AG04449 (cell line): ENCODE measurements at regions of chr16 and their contacts with region 1.

Region 1: DNA sequence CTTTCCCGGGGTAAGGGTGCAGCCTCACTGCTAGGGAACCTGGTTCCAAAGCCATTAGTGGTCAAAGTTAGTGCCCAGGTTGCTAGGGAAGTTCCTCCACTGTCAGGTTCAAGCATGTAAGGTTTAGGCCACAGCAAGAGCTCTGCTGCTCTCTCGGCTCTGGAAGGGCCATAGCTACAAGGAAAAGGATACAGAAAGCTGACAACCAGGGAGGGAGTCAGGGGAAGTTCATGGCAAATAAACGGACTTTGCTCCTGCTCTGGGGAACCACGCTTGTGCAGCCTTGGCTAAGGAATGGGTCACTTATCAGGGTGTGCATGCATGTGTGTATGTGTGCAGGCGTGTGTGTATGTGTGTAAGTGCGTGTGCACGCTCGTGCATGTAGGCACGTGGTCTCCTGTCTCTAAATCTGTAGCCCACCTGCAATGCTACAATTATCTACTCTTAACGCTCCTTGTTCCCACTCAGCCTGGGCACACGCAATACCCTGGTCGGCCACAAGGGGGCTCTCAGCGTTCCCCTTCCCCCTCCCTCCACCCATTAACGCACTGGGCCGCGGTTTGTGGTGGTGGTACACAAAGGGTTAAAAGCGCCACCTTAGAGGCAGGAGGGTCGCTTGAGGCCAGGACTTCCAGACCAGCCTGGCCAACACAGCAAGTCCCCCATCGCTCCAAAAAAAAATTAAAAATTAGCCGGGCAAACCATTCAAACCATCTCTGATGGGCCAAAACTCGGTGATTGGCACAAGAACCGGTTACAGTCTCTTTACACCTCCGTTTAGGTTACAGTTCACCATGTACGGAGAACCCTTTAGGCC is 48.4 kb upstream of the KDM8 start:
- DNase-seq: no peak
- H3K4me3 ChIP-seq: no peak overlapping the region
- CTCF ChIP-seq: peak; percentile 95

Region 2: GRCh38 chr16:27138266-27138665 is 16.6 kb before region 1 on chr16:
- CTCF ChIA-PET with region 1: interaction called, 11 read pairs
- POLR2A ChIA-PET with region 1: no interaction called
- DNase-seq: no peak
- H3K4me3 ChIP-seq: no peak overlapping the region
- CTCF ChIP-seq: no peak

Region 3: DNA sequence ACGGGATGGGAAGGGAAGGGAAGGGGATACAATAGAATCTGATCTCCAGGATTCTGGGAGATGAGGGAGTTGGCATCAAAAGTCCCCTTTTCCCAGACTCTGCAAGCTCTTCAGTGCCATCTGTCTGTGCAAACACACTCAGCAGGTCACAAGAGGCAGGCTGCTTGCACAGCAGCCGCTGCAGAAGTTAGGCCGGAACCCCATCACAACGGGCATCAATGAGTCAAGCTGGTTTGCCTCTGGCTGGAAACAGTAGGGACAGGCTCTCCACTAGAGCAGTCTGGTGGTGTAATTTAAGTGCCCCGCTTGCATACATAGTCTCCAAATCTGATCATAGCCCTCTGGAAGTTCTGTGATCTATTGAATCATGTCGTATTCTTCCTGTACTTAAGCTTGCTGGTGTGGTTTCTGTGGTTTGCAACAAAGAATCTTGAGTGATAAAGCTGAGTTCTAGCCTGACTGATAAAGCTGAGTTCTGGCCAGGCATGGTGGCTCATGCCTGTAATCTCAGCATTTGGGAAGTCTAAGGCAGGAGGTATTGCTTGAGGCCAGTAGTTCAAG is 14.7 kb after region 1 on chr16:
- CTCF ChIA-PET with region 1: interaction called, 129 read pairs
- POLR2A ChIA-PET with region 1: no interaction called
- DNase-seq: peak; percentile 72
- H3K4me3 ChIP-seq: no peak overlapping the region
- CTCF ChIP-seq: peak; percentile 16

Region 4: GRCh38 chr16:27179500-27180072 is 24.7 kb after region 1 on chr16:
- CTCF ChIA-PET with region 1: interaction called, 11 read pairs
- POLR2A ChIA-PET with region 1: no interaction called
- DNase-seq: no peak
- H3K4me3 ChIP-seq: no peak overlapping the region
- CTCF ChIP-seq: peak; percentile 76

Region 5: GRCh38 chr16:27401768-27402568 is 247.1 kb after region 1 on chr16 and contains the start of gene IL21R:
- CTCF ChIA-PET with region 1: no interaction called
- POLR2A ChIA-PET with region 1: no interaction called
- DNase-seq: no peak
- H3K4me3 ChIP-seq: no peak within 1 kb of the TSS
- CTCF ChIP-seq: no peak

Region 6: GRCh38 chr16:27461483-27462171 is 306.7 kb after region 1 on chr16:
- CTCF ChIA-PET with region 1: interaction called, 13 read pairs
- POLR2A ChIA-PET with region 1: no interaction called
- DNase-seq: no peak
- H3K4me3 ChIP-seq: no peak overlapping the region
- CTCF ChIP-seq: no peak